ENCODE measurements at regions of chr10 and their contacts with region 1.

Region 1: GRCh38 chr10:74008212-74008731 is 10.4 kb downstream of the VCL start:
- DNase-seq: no peak
- H3K4me3 Mint-ChIP-seq: no peak overlapping the region
- H3K27ac Mint-ChIP-seq: no peak overlapping the region
- H3K4me1 Mint-ChIP-seq: peaks cover 53% of the 10 kb centered on the region
- H3K27me3 Mint-ChIP-seq: no peaks in the 10 kb centered on the region
- CTCF ChIP-seq: no peak

Region 2: DNA sequence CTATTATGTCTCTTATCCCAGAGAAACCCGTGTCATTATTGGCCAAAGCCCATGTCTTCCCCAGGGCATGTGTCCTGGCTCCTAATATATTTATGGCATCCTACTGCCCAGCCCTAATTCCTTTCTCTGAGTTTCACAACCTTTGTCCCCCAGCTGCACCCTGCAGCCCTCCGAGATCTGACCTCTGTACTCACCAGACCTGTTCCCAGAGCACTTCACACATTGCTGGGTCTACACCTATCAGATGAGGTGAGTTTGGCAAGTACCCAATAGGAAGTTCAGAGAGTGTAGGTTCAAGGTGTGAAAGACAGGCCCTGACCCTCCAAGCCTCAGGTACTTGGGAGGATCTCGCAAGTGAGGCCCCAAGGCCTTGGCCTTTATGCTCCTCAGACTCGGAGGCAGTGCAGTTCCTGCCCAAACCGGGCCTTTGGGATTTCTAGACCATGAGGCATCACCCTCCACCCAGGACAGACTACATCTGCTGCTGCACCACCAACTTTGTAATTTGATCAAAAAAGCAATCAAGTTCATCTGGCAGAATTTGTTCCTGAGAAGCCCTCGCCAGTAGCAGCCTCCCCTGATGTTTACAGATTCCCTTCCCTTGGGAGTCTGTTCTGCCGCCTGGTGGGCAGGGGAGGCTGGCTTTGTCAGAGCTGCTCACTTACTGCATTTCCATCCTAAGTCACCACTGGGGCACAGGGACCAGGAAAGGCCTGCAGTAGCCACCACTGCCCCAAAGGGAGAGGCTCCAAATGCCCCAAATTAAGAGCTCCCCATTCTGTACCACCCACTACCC is 136.2 kb before region 1 on chr10:
- CTCF ChIA-PET with region 1: interaction called, 13 read pairs
- intact Hi-C with region 1: no loop called
- DNase-seq: peak; percentile 54
- H3K4me3 Mint-ChIP-seq: peak overlapping the region; percentile 61
- H3K27ac Mint-ChIP-seq: peak overlapping the region; percentile 53
- H3K4me1 Mint-ChIP-seq: peaks cover 52% of the 10 kb centered on the region
- H3K27me3 Mint-ChIP-seq: no peaks in the 10 kb centered on the region
- CTCF ChIP-seq: no peak